ENCODE measurements at regions of chr13 and their contacts with region 1.

Region 1: GRCh38 chr13:110715395-110716235 is 2.1 kb downstream of the ING1 start:
- DNase-seq: peak; percentile 99
- H3K4me3 ChIP-seq: peak overlapping the region; percentile 86 to 90
- H3K27ac ChIP-seq: peak overlapping the region; percentile 98 to 100
- H3K4me1 ChIP-seq: peaks cover 4 to 20% of the 10 kb centered on the region in 2 donors
- H3K27me3 ChIP-seq: no peaks in the 10 kb centered on the region
- CTCF ChIP-seq: peak; percentile 33 to 49 (median 33)

Region 2: GRCh38 chr13:110455941-110456340 is 259.7 kb before region 1 on chr13:
- intact Hi-C with region 1: loop called (anchors 10 kb)
- DNase-seq: peak in 1 of 2 donors; percentile 84
- H3K4me3 ChIP-seq: no peak overlapping the region
- H3K27ac ChIP-seq: no peak overlapping the region
- H3K4me1 ChIP-seq: no peaks in the 10 kb centered on the region
- H3K27me3 ChIP-seq: no peaks in the 10 kb centered on the region
- CTCF ChIP-seq: peak; percentile 67 to 75 (median 67)

Region 3: DNA sequence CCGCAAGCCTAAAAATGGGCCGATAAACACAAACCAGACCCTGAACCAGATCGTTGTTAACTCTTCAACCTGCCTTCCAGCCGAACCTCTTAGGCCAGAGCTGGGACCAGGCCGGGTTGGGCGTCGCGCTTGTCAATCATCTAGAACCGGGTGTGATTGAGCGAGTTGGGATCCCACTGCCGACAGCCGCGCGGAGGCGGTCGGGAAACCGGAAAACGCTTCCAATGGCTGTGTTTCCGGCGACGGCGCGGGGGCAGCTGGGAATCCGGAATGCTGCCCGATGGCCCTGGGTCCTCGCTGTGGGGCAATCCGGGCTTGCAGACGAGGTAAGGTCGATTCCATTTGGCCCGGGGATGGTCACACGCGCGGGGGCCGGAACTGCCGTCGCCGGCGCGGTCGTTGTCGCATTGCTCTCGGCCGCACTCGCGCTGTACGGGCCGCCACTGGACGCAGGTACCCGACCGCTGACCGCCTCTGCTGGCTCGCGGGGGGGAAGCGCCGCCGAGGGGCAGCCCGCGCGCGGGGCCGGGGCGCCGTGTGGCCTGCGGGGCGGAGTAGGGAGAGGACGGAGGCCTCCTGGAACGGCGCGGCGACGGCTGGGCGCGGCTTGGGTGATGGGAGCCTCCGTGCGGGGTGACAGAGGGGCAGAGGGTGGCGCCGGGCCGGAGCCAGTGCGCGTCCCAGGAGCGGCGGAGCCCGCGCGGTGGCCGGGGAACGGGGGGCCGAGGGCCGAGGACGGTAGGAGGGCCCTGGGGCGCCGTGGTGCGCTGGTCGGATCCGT is 100.1 kb before region 1 on chr13 and contains the start of gene NAXD:
- intact Hi-C with region 1: loop called (anchors 2 kb)
- DNase-seq: peak; percentile 67 to 96
- H3K4me3 ChIP-seq: peak within 1 kb of the TSS; percentile 89 to 98
- H3K27ac ChIP-seq: peak within 1 kb of the TSS; percentile 95 to 96
- H3K4me1 ChIP-seq: peaks cover 6 to 21% of the 10 kb centered on the region in 2 donors
- H3K27me3 ChIP-seq: no peaks in the 10 kb centered on the region
- CTCF ChIP-seq: no peak
- total RNA-seq, gene NAXD: 1.9 TPM

Region 4: GRCh38 chr13:110874508-110874960 is 158.9 kb after region 1 on chr13:
- intact Hi-C with region 1: loop called (anchors 1 kb)
- DNase-seq: peak; percentile 50 to 93
- H3K4me3 ChIP-seq: peak overlapping the region; percentile 49 to 61
- H3K27ac ChIP-seq: peak overlapping the region in 1 of 2 donors; percentile 53
- H3K4me1 ChIP-seq: peaks cover 11 to 20% of the 10 kb centered on the region in 2 donors
- H3K27me3 ChIP-seq: no peaks in the 10 kb centered on the region
- CTCF ChIP-seq: no peak

Region 5: GRCh38 chr13:111216166-111216960 is 500.7 kb after region 1 on chr13:
- intact Hi-C with region 1: loop called (anchors 10 kb)
- DNase-seq: peak in 1 of 2 donors; percentile 69
- H3K4me3 ChIP-seq: peak overlapping the region in 1 of 2 donors; percentile 24
- H3K27ac ChIP-seq: peak overlapping the region; percentile 77 to 82
- H3K4me1 ChIP-seq: peaks cover 12 to 69% of the 10 kb centered on the region in 2 donors
- H3K27me3 ChIP-seq: no peaks in the 10 kb centered on the region
- CTCF ChIP-seq: peak; percentile 35 to 74 (median 49)